ENCODE measurements at regions of chr2 and their contacts with region 1.

Region 1: GRCh38 chr2:61176755-61177726 is 15.1 kb downstream of the C2orf74 start:
- DNase-seq: peak; percentile 94
- ATAC-seq: peak; percentile 89
- H3K4me3 ChIP-seq: peak overlapping the region; percentile 69 to 97 (median 90)
- H3K4me3 Mint-ChIP-seq: peak overlapping the region; percentile 97
- H3K27ac ChIP-seq: peak overlapping the region; percentile 91 to 96
- H3K27ac Mint-ChIP-seq: peak overlapping the region; percentile 90
- H3K4me1 ChIP-seq: peaks cover 26 to 42% of the 10 kb centered on the region in 2 donors
- H3K4me1 Mint-ChIP-seq: peaks cover 48% of the 10 kb centered on the region
- H3K27me3 ChIP-seq: no peaks in the 10 kb centered on the region
- H3K27me3 Mint-ChIP-seq: no peaks in the 10 kb centered on the region
- CTCF ChIP-seq: no peak

Region 2: DNA sequence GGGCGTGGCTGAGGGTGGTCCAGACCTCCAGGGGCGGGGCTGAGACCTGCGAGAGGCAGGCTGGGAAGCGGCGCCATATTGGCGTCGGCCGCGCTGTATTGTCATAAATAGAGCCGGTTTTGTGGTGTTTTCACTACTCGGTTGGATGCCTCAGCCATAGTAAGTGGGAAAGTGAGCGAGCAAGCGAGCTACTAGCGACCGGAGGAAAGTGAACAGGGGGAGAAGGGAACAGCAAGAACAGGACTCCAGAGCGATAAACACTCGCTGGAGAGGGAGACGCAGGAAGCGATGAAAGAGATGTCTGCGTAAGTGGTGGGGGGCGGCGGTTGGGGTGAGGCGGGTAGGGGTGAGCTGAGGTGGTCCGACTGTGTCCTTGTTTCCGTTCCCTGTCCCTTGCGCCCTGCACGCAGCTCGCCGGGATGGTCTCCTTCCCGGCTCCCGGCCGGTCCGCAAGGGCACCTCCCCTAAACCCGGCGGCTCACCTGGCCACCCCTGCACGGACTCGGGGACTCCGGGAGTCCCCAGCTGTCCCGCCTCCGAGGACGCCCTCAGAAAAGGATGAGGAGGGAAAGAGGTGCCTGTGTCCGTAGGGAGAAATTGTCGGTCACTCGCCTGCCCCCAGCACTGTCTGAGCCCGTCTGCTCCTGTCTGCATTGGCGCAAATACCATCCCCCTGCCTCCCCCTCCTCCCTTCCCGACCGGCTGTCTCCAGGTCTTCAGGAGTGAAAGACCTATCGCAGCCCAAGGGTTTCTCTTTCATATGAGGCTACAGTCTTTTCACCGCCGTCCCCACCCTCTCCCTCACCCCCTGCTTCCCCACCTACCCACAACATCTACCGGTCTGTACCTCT is 420.6 kb before region 1 on chr2 and contains the start of gene PAPOLG:
- CTCF ChIA-PET with region 1: no interaction called
- POLR2A ChIA-PET with region 1: interaction called, 3 read pairs
- intact Hi-C with region 1: loop called (anchors 1 kb)
- DNase-seq: peak; percentile 96
- ATAC-seq: peak; percentile 100
- H3K4me3 ChIP-seq: peak within 1 kb of the TSS; percentile 77 to 100 (median 87)
- H3K4me3 Mint-ChIP-seq: peak within 1 kb of the TSS; percentile 97
- H3K27ac ChIP-seq: peak within 1 kb of the TSS; percentile 85 to 87
- H3K27ac Mint-ChIP-seq: peak within 1 kb of the TSS; percentile 96
- H3K4me1 ChIP-seq: peaks cover 13 to 15% of the 10 kb centered on the region in 2 donors
- H3K4me1 Mint-ChIP-seq: peaks cover 29% of the 10 kb centered on the region
- H3K27me3 ChIP-seq: no peaks in the 10 kb centered on the region
- H3K27me3 Mint-ChIP-seq: no peaks in the 10 kb centered on the region
- CTCF ChIP-seq: no peak
- total RNA-seq, gene PAPOLG: 27.5 and 37.2 TPM in 2 replicates

Region 3: DNA sequence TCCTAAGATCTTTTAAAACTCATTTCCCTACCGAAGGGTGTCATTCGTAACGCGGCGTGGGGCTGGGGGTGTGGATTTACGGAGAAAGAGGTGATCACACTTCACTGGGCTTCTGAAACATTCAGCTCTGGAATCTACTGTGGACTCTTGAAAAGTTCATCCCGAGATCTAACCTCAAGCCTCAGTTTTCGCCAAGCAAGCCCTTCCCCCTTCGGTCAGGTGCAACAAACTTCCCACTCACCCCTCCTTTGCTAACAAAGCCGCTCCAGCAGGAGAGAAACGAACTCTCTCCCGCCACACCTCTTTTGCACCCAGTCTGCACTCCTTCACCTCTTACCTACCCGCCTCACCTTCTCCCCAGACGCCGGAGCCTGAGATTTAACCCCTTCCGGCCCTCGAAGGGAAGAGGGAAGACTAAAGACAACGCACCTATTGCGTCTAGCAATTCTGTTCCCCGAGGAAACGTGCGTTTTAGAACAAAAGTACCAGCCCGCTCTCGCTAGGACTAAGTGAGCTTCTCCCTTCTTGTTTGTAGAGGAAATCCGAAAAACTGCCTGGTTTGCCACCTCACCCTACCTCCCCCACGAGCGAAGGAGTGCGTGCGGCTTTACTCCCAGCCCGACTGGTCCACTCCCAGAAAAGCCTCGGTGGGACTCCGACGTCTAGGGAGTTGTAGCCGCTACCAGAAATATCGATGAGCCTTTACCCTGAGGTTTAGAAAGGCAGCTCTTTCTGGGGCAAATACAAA is 160.1 kb before region 1 on chr2:
- CTCF ChIA-PET with region 1: no interaction called
- POLR2A ChIA-PET with region 1: no interaction called
- intact Hi-C with region 1: loop called (anchors 1 kb)
- DNase-seq: peak; percentile 83
- ATAC-seq: peak; percentile 69
- H3K4me3 ChIP-seq: peak overlapping the region; percentile 81 to 98 (median 94)
- H3K4me3 Mint-ChIP-seq: peak overlapping the region; percentile 100
- H3K27ac ChIP-seq: peak overlapping the region; percentile 69 to 84
- H3K27ac Mint-ChIP-seq: peak overlapping the region; percentile 98
- H3K4me1 ChIP-seq: peaks cover 5 to 19% of the 10 kb centered on the region in 2 donors
- H3K4me1 Mint-ChIP-seq: peaks cover 37% of the 10 kb centered on the region
- H3K27me3 ChIP-seq: no peaks in the 10 kb centered on the region
- H3K27me3 Mint-ChIP-seq: no peaks in the 10 kb centered on the region
- CTCF ChIP-seq: no peak

Region 4: GRCh38 chr2:61144697-61145268 is 32.3 kb before region 1 on chr2:
- CTCF ChIA-PET with region 1: no interaction called
- POLR2A ChIA-PET with region 1: interaction called, 8 read pairs
- intact Hi-C with region 1: loop called (anchors 1 kb)
- DNase-seq: peak; percentile 97
- ATAC-seq: peak; percentile 90
- H3K4me3 ChIP-seq: peak overlapping the region; percentile 78 to 95 (median 88)
- H3K4me3 Mint-ChIP-seq: peak overlapping the region; percentile 95
- H3K27ac ChIP-seq: peak overlapping the region; percentile 76 to 78
- H3K27ac Mint-ChIP-seq: peak overlapping the region; percentile 98
- H3K4me1 ChIP-seq: peaks cover 8 to 11% of the 10 kb centered on the region in 2 donors
- H3K4me1 Mint-ChIP-seq: peaks cover 13% of the 10 kb centered on the region
- H3K27me3 ChIP-seq: no peaks in the 10 kb centered on the region
- H3K27me3 Mint-ChIP-seq: no peaks in the 10 kb centered on the region
- CTCF ChIP-seq: no peak

Region 5: DNA sequence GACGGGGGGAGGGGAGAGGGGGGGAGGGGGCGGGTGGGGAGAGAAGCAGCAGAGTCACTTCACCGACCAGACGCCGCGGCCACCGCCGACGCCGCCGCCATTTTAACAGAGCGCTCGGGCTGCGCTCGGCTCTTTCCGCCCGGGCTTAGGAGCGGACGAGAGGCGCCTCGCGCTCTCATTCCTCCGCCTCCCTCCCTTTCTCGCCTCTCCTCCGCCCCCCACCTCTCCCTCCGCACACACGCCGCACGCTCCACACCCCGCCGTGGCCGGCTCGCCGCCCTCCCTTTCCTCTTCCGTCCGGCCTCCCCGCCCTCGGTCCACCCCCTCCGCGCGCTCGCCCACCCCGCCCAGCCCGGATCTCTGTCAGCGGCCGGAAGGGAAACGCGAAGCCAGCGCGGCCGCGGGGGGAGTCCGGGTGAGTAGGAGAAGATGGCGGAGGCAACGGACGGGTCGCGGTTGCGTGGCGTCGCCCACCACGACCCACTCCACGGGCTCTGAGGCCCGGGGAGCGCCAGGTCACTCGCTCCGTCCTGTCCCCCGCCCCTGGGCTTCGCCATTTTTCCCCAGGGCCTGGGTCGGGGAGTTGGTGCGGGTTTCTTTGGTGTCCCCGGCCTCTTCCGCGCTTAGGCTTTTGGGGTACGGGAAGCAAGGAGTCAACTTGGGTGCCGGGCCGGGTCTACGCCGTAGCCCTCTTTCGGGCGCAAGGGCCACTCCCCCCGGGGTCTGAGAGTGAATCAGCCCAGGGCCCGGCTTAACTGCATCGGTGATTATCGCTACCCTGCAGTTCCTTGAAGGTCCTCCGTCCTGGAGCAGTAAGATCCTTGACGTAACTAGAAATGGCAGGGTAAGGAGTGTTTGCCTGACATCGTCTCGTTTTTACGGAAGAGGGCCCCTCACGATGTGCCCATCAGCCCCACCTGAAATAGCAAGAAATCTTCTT is 294.2 kb after region 1 on chr2 and contains the start of gene USP34:
- CTCF ChIA-PET with region 1: no interaction called
- POLR2A ChIA-PET with region 1: no interaction called
- intact Hi-C with region 1: loop called (anchors 2 kb)
- DNase-seq: peak; percentile 96
- ATAC-seq: peak; percentile 79
- H3K4me3 ChIP-seq: peak within 1 kb of the TSS; percentile 69 to 95 (median 85)
- H3K4me3 Mint-ChIP-seq: peak within 1 kb of the TSS; percentile 93
- H3K27ac ChIP-seq: peak within 1 kb of the TSS; percentile 96 to 99
- H3K27ac Mint-ChIP-seq: peak within 1 kb of the TSS; percentile 96
- H3K4me1 ChIP-seq: peaks cover 24% of the 10 kb centered on the region in 2 donors
- H3K4me1 Mint-ChIP-seq: peaks cover 29% of the 10 kb centered on the region
- H3K27me3 ChIP-seq: no peaks in the 10 kb centered on the region
- H3K27me3 Mint-ChIP-seq: no peaks in the 10 kb centered on the region
- CTCF ChIP-seq: no peak
- total RNA-seq, gene USP34: 311 and 320 TPM in 2 replicates

Region 6: DNA sequence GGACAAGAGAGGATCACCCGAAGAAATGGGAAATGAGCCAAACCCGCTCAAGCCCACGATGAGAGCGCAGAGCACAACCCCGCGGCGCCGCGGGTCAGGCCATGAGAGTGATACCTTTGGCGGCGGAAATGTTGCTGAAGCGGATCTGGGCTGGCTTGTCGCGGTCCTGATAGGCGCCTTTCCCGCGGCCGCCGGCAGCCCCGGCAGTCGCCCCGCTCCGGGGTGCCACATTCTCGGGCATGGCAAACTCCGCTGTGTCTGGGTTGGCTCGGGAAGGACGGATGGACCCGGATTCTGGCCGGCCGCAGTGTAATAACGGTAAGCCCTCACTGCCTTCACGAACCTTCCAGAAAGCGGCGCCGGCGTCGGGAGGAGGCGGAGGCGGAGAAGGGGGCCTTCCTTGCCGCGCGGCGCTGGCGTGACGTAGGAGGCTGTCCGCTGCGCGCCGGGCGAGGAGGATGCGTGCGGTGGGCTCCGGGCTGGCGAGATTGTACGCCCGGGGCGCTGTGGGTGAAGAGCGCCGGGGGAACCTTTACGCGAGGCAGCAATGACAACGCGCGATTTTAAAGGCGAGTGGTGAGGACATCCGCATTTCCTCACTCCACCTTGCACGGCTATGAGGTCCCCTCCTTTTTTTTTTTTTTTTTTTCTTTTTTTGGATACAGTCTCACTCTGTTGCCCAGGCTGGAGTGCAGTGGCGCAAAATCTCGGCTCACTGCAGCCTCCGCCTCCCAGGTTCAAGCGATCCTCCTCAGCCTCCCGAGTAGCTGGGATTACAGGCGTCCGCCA is 711.4 kb after region 1 on chr2 and contains the start of gene CCT4:
- CTCF ChIA-PET with region 1: no interaction called
- POLR2A ChIA-PET with region 1: no interaction called
- intact Hi-C with region 1: loop called (anchors 10 kb)
- DNase-seq: peak; percentile 98
- ATAC-seq: peak; percentile 85
- H3K4me3 ChIP-seq: peak within 1 kb of the TSS; percentile 79 to 92 (median 89)
- H3K4me3 Mint-ChIP-seq: peak within 1 kb of the TSS; percentile 100
- H3K27ac ChIP-seq: peak within 1 kb of the TSS; percentile 95 to 96
- H3K27ac Mint-ChIP-seq: peak within 1 kb of the TSS; percentile 100
- H3K4me1 ChIP-seq: peaks cover 11 to 25% of the 10 kb centered on the region in 2 donors
- H3K4me1 Mint-ChIP-seq: peaks cover 32% of the 10 kb centered on the region
- H3K27me3 ChIP-seq: no peaks in the 10 kb centered on the region
- H3K27me3 Mint-ChIP-seq: no peaks in the 10 kb centered on the region
- CTCF ChIP-seq: no peak
- total RNA-seq, gene CCT4: 86.4 and 88.0 TPM in 2 replicates